Right ventricle myocardium inferior (tissue), 1 donor: ENCODE measurements at regions of chr15 and their contacts with region 1.

Region 1: DNA sequence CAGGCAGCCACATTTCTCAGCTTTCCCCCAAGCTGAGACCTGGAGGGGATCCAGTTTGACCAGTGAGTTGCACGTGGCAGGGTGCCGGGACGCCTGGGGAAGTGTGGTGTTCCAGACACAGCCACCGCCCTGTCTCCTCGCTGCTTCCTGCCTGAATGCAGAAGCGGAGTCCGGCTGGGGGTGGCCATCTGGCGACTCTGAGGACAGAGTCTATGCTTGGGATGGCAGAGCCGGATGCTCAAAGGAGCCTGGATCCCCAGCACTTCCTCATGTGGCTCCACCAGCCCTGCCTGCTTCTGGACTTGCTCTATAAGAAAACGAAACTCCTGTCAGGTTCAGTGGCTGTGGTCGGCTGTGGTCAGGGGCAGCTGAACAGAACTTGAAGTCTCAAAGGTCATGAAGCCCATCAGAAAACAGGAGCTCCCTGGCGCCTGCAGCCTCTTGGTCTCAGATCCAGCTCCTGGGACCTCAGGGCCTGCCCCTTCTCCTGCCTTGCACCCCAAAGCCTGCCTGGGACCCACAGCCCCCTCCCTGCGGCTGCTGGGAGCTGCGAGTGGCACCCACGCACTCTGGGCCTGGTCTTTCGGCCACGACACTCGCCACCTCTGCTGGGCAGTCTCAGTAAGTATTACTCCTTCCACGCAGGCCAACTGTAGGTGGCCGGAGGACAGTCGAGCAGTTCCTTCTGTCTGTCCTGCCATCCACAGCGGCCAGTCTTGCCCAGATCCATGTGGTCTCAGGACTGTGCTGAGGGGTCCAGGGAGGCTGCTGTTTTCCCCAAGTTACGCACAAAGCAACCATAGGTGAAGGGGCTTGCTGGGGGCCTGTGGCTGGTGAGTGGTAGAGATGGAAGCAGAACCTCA is 112.8 kb upstream of the MEF2A start:
- DNase-seq: peak; percentile 95
- ATAC-seq: peak; percentile 30

Region 2: DNA sequence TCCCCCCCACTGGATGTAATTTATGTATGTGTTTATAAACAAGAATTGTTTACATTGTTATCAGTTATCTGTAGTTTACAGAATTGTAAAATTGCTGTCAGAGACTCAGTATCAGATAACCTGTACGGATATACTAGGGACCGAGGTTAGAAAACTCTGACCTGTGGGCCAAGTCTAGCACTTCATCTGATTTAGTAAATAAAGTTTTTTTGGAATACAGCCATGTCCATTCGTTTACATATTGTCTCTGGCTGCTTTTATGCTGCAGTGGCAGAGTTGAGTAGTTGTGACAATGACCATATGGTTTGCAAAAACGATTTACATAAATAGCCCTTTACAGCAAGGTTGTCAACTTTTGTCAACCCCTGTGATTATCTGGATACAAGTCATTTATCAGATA is 149.1 kb before region 1 on chr15:
- intact Hi-C with region 1: no loop called
- DNase-seq: no peak
- ATAC-seq: no peak

Region 3: GRCh38 chr15:99424978-99425656 is 27.9 kb before region 1 on chr15:
- intact Hi-C with region 1: loop called (anchors 2 kb)
- DNase-seq: peak; percentile 74
- ATAC-seq: peak; percentile 79

Region 4: DNA sequence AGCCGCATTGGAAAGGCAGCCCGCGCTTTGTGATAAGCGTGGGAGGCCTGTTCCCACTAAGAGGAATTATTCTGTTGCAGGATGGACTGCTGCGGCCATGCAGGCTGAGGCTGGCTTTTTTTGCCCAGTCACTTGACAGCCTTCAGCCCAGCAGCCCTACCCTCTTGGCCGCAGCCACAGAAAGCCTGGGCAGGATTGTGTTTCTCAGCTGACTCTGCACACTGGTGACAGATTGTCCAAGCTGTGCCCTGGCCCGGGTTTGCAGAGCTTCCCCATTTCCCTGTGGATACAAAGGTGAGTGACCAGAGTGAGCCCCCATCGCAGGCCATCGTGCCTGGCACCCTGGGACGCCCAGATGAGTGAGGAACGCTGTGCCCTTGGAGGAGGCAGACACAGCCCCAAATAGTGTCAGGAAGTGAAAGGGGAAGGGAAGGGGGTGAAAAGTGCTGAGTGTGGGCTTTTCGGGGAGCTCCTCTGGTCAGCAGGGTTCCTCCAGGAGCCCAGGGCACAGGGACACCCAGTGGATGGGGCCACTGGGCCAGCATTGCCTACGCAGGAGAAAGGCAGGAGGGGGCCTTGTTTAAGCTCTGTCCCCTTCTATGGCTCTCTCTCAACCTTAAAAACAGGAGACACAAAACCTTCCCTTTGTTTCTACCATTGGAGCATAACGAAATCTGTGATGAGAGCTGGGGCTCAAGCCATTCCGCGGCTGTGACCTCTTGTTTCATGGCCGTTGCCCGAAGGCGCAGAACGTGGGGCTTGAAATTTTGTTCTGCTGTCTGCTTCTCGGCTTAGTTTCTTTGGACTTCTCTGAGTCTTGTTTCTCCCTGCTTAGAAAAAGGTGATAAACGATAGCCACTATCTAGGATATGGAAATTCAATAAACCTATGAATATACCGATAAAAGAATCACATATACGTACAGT is 21.2 kb after region 1 on chr15:
- intact Hi-C with region 1: loop called (anchors 2 kb)
- DNase-seq: peak; percentile 82
- ATAC-seq: peak; percentile 81

Region 5: GRCh38 chr15:99486371-99487336 is 33.6 kb after region 1 on chr15:
- intact Hi-C with region 1: loop called (anchors 5 kb)
- DNase-seq: peak; percentile 90
- ATAC-seq: peak; percentile 89